ENCODE measurements at regions of chrX and their contacts with region 1.

Region 1: GRCh38 chrX:72245461-72246089 is 6.7 kb upstream of the ERCC6L start:
- DNase-seq: peak in 5 of 6 donors; percentile 27 to 83 (median 67)
- ATAC-seq: peak; percentile 66 to 92 (median 86)
- H3K4me3 ChIP-seq: no peak overlapping the region
- H3K27ac ChIP-seq: no peak overlapping the region
- H3K4me1 ChIP-seq: peaks cover 0 to 4% (median 0%) of the 10 kb centered on the region in 3 donors
- H3K27me3 ChIP-seq: no peaks in the 10 kb centered on the region
- CTCF ChIP-seq: peak; percentile 59 to 79 (median 62)

Region 2: DNA sequence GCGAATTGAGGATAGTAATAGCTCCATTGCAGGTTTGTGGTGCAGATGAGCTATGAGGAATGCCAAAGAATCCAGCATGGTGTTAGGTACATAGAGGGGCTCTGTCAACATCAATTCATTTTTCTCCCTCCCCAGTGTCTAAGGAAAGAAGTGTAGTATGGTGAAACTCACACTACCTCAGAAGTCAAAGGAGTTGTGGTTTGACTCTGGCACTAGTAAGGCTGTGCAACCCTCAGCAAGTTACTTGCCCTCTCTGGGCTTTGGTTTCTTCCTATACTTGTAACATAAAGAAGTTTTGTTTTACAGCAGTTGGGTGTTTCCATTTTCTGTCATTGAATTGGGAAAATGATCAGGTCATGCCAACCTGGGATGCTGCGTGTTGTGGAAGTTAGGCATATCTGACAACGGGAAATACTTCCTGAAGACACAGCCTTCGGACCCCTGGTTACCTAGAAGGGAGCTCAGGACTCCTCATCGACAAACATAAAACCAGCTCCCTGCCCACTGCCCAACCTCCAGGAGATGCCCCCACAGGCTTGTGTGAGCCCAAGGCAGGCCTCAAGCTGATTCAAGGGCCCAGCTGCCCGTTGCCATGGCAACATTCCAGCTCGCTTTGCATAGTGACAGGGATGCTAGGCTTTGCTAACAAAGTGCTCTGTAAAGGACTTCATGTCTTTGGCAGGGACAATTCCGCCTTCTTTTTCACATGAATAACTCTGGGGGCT is 185.2 kb before region 1 on chrX:
- intact Hi-C with region 1: no loop called
- DNase-seq: no peak
- ATAC-seq: no peak
- H3K4me3 ChIP-seq: no peak overlapping the region
- H3K27ac ChIP-seq: no peak overlapping the region
- H3K4me1 ChIP-seq: no peaks in the 10 kb centered on the region
- H3K27me3 ChIP-seq: peaks cover 0 to 13% (median 1%) of the 10 kb centered on the region in 4 donors
- CTCF ChIP-seq: no peak

Region 3: GRCh38 chrX:72540318-72540717 is 294.7 kb after region 1 on chrX:
- intact Hi-C with region 1: loop called in 1 of 3 experiments (anchors 10 kb)
- DNase-seq: no peak
- ATAC-seq: peak; percentile 56 to 81 (median 78)
- H3K4me3 ChIP-seq: no peak overlapping the region
- H3K27ac ChIP-seq: no peak overlapping the region
- H3K4me1 ChIP-seq: no peaks in the 10 kb centered on the region
- H3K27me3 ChIP-seq: no peaks in the 10 kb centered on the region
- CTCF ChIP-seq: peak in 2 of 4 donors; percentile 24 to 25

Region 4: GRCh38 chrX:72705814-72706213 is 460.2 kb after region 1 on chrX:
- intact Hi-C with region 1: no loop called
- DNase-seq: no peak
- ATAC-seq: no peak
- H3K4me3 ChIP-seq: no peak overlapping the region
- H3K27ac ChIP-seq: no peak overlapping the region
- H3K4me1 ChIP-seq: no peaks in the 10 kb centered on the region
- H3K27me3 ChIP-seq: no peaks in the 10 kb centered on the region
- CTCF ChIP-seq: no peak

Measured in pancreas (tissue), 10 donors.